Activated CD4-positive, alpha-beta memory T cell treated with anti-CD3 and anti-CD28 coated beads, Interleukin-2, amount 10 ng/mL, durations not matched to agents 7 days and 5 days (primary cell): ENCODE measurements at regions of chr7 and their contacts with region 1.

Region 1: DNA sequence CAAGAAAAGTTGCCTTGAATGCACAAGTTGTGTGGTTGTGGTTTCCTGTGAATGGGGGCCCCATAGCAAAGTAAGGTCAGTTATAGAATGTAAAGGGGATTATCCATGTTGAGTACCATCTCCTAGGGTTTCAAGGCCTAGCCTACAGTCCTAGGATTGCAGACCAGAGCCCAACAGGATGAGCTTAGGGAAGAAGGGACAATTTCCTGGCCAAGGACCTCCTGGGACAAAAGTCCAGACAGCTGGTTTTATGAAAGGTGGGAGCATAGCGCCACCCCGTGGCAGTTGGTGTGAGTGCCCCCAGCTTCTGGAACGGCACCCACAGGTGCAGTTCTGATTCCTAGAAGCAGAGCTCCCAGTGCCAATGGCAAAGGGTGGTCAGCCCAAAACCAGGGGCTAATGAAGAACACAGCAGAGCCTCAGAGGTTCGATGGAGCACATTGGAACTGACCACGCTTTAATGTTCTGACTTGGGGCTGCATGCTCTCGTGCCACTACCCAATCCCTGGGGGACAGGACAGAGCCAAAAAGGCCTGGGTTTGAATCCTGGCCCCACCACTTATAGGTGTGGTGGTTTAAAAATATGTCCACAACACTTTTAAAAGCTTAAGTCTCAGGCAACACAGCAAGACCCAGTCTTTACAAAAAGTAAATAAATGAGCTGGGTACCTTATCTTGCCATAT is 25.8 kb upstream of the TMEM120A start:
- DNase-seq: peak; percentile 81
- H3K4me3 Mint-ChIP-seq: no peak overlapping the region
- H3K27ac Mint-ChIP-seq: peak overlapping the region; percentile 42
- H3K4me1 Mint-ChIP-seq: peaks cover 20% of the 10 kb centered on the region
- H3K27me3 Mint-ChIP-seq: no peaks in the 10 kb centered on the region

Region 2: GRCh38 chr7:75866489-75867389 is 153.4 kb before region 1 on chr7:
- CTCF ChIA-PET with region 1: interaction called, 78 read pairs
- POLR2A ChIA-PET with region 1: interaction called, 3 read pairs
- DNase-seq: peak; percentile 56
- H3K4me3 Mint-ChIP-seq: no peak overlapping the region
- H3K27ac Mint-ChIP-seq: no peak overlapping the region
- H3K4me1 Mint-ChIP-seq: peaks cover 19% of the 10 kb centered on the region
- H3K27me3 Mint-ChIP-seq: peaks cover 9% of the 10 kb centered on the region

Region 3: DNA sequence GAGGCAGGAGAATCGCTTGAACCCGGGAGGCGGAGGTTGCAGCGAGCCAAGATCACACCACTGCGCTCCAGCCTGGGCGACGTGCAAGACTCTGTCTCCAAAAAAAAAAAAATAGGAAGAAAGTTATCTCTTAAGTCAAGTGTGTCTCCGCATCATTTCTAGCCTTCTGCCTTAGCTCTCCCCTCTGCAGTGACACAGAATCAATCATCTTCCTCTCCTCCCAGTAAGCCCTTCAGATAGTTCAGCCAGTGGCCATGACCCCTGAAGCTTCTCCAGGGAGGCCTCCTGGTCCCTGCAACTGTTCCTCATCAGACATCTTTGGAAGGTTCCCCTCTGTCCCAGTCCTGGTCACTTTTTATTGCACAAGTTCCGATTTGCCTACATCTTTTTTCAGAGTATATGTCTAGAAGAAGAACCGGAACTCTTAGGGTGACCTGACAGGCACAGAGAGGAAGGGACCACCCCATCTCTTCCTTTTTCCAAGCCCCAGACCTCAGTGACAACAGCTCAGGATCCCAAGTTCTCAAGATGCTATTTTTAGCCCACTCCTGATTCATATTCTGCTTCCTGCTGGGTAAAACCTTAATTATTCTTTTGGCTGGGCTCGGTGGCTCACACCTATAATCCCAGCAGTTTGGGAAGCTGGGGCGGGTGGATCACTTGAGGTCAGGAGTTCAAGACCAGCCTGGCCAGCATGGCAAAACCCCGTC is 147.9 kb before region 1 on chr7:
- CTCF ChIA-PET with region 1: interaction called, 78 read pairs
- POLR2A ChIA-PET with region 1: interaction called, 3 read pairs
- DNase-seq: no peak
- H3K4me3 Mint-ChIP-seq: no peak overlapping the region
- H3K27ac Mint-ChIP-seq: no peak overlapping the region
- H3K4me1 Mint-ChIP-seq: peaks cover 16% of the 10 kb centered on the region
- H3K27me3 Mint-ChIP-seq: no peaks in the 10 kb centered on the region

Region 4: GRCh38 chr7:75878769-75879611 is 141.2 kb before region 1 on chr7 and contains the start of gene RHBDD2:
- CTCF ChIA-PET with region 1: interaction called, 12 read pairs
- POLR2A ChIA-PET with region 1: no interaction called
- DNase-seq: peak; percentile 97
- H3K4me3 Mint-ChIP-seq: peak within 1 kb of the TSS; percentile 89
- H3K27ac Mint-ChIP-seq: peak within 1 kb of the TSS; percentile 85
- H3K4me1 Mint-ChIP-seq: peaks cover 35% of the 10 kb centered on the region
- H3K27me3 Mint-ChIP-seq: no peaks in the 10 kb centered on the region
- total RNA-seq, gene RHBDD2: 47.7 to 51.7 TPM

Region 5: GRCh38 chr7:75914730-75915585 is 105.2 kb before region 1 on chr7 and contains the start of gene POR:
- CTCF ChIA-PET with region 1: interaction called, 11 read pairs
- POLR2A ChIA-PET with region 1: interaction called, 3 read pairs
- DNase-seq: peak; percentile 97
- H3K4me3 Mint-ChIP-seq: peak within 1 kb of the TSS; percentile 86
- H3K27ac Mint-ChIP-seq: peak within 1 kb of the TSS; percentile 81
- H3K4me1 Mint-ChIP-seq: peaks cover 23% of the 10 kb centered on the region
- H3K27me3 Mint-ChIP-seq: no peaks in the 10 kb centered on the region
- total RNA-seq, gene POR: 34.0 to 45.3 TPM

Region 6: DNA sequence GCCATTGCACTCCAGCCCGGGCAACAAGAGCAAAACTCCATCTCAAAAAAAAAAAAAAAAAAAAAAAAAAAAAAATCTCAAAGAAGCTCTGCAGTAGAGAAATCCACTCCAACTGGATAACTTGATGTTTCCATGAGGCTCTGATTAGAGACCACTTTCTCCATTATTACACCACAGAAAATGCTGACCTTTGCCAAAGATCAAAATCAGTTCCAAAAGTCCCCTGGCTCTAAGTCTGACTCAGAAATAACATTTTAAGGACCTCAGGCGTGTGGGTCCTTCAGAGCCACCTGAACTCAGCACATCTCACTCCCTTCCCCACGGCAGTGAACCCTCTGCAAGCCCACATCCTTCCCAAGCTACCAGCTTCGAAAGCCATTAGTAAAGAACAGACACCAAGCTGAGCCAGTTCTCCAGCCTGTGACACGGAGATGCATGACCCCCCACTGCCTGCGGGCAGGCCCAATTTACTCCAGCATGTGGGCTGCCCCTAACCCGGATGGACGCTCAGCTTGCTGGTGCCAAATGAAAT is 12.0 kb before region 1 on chr7:
- CTCF ChIA-PET with region 1: interaction called, 24 read pairs
- POLR2A ChIA-PET with region 1: interaction called, 3 read pairs
- DNase-seq: peak; percentile 48
- H3K4me3 Mint-ChIP-seq: no peak overlapping the region
- H3K27ac Mint-ChIP-seq: peak overlapping the region; percentile 78
- H3K4me1 Mint-ChIP-seq: peaks cover 31% of the 10 kb centered on the region
- H3K27me3 Mint-ChIP-seq: peaks cover 6% of the 10 kb centered on the region

Region 7: DNA sequence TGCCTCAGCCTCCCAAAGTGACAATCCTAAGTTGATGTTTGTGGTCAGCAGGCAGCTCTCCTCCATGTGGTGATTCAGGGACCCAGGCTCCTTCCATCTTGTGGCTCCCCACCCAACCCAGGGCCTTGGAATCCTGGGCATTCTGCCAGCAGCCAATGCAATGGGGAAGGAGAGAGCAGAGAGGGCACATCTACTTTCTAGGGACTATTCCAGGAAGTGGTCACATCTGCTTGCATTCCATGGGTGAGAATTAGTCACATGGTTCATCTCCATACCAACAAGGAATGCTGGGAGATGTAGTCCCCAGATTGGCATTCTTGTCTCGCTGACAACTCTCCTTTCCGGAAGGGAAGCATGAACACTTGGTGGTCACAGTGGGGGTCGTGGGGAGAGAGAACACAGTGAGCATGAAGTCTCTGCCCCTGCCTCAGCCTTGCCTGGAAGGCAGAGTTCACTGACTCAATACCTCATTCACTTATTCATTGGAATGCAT is 171.7 kb after region 1 on chr7:
- CTCF ChIA-PET with region 1: no interaction called
- POLR2A ChIA-PET with region 1: no interaction called
- DNase-seq: no peak
- H3K4me3 Mint-ChIP-seq: no peak overlapping the region
- H3K27ac Mint-ChIP-seq: no peak overlapping the region
- H3K4me1 Mint-ChIP-seq: no peaks in the 10 kb centered on the region
- H3K27me3 Mint-ChIP-seq: no peaks in the 10 kb centered on the region